Activated CD4-positive, alpha-beta memory T cell treated with anti-CD3 and anti-CD28 coated beads, Interleukin-2, amount 10 ng/mL, durations not matched to agents 7 days and 5 days (primary cell): ENCODE measurements at regions of chr14 and their contacts with region 1.

Region 1: DNA sequence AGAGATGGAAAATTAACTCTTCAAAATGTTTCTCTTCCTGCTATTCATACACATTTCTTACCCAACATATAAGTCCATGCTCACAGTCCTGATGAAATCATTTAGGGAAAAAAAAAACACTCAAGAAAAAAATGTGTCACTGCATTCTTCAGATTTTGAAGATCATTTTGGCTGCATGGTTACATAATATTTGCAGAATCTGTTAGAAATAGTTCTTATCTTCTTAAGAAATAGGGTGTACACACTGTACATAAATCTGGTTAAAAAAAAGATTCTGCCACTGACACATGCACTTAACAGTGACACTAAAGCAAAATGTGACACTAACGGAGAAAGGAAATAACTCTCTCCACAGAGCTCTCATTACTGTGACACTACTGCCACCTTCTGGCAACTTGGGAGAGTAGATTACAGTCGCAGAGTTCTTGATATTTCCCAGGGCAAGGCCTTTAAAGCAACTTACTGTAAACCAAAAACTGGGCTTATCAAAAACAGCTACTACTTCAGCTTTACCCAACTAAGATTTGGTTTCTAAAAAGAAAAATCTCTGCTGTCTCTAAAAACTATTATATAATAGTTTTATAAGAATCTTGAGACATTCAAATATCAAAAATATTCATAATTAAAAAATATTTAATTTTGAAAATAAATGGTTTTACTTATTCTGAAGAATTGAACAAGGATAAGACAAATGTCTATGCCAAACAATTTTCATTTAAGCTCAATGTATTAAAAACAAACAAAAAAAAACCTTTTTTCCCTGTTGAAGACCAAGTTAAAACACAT is 65.0 kb downstream of the SETD3 start:
- DNase-seq: peak; percentile 67
- H3K4me3 Mint-ChIP-seq: no peak overlapping the region
- H3K27ac Mint-ChIP-seq: peak overlapping the region; percentile 8
- H3K4me1 Mint-ChIP-seq: peaks cover 28% of the 10 kb centered on the region
- H3K27me3 Mint-ChIP-seq: no peaks in the 10 kb centered on the region

Region 2: GRCh38 chr14:98651042-98651441 is 764.6 kb before region 1 on chr14:
- CTCF ChIA-PET with region 1: no interaction called
- POLR2A ChIA-PET with region 1: no interaction called
- DNase-seq: no peak
- H3K4me3 Mint-ChIP-seq: no peak overlapping the region
- H3K27ac Mint-ChIP-seq: no peak overlapping the region
- H3K4me1 Mint-ChIP-seq: no peaks in the 10 kb centered on the region
- H3K27me3 Mint-ChIP-seq: no peaks in the 10 kb centered on the region

Region 3: GRCh38 chr14:99320105-99320572 is 95.5 kb before region 1 on chr14:
- CTCF ChIA-PET with region 1: interaction called, 54 read pairs
- POLR2A ChIA-PET with region 1: interaction called, 3 read pairs
- DNase-seq: peak; percentile 79
- H3K4me3 Mint-ChIP-seq: no peak overlapping the region
- H3K27ac Mint-ChIP-seq: no peak overlapping the region
- H3K4me1 Mint-ChIP-seq: peaks cover 14% of the 10 kb centered on the region
- H3K27me3 Mint-ChIP-seq: no peaks in the 10 kb centered on the region

Region 4: DNA sequence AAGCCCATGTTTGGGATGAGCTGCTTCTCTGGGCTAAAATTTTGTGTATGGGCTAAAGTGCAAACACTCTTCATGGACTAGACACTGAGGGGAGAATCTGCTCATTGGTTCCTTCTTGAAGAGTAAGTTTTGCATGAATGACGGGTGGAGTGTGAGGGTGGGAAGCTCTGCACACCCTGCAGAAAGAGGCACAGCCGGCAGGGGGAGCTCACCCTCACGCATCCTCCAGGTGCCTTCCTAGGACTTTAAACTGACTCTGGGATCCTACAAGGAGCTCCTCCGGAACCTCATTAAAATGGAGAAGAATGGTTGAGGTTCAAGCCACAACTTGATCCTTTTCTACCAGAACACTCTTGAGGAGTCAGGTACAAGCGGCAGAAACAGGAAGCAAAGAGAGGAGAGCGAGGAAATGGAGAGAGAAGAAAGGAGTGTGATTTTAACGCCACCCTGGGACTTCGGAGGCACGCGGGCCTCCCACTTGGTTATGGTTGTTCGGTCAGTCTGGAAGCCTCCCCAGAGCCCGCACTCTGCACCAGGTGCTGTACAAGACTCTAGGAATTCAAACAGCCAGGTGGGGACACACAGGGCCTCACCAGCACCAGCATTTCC is 22.5 kb before region 1 on chr14:
- CTCF ChIA-PET with region 1: interaction called, 94 read pairs
- POLR2A ChIA-PET with region 1: interaction called, 5 read pairs
- DNase-seq: peak; percentile 44
- H3K4me3 Mint-ChIP-seq: no peak overlapping the region
- H3K27ac Mint-ChIP-seq: no peak overlapping the region
- H3K4me1 Mint-ChIP-seq: peaks cover 14% of the 10 kb centered on the region
- H3K27me3 Mint-ChIP-seq: no peaks in the 10 kb centered on the region

Region 5: DNA sequence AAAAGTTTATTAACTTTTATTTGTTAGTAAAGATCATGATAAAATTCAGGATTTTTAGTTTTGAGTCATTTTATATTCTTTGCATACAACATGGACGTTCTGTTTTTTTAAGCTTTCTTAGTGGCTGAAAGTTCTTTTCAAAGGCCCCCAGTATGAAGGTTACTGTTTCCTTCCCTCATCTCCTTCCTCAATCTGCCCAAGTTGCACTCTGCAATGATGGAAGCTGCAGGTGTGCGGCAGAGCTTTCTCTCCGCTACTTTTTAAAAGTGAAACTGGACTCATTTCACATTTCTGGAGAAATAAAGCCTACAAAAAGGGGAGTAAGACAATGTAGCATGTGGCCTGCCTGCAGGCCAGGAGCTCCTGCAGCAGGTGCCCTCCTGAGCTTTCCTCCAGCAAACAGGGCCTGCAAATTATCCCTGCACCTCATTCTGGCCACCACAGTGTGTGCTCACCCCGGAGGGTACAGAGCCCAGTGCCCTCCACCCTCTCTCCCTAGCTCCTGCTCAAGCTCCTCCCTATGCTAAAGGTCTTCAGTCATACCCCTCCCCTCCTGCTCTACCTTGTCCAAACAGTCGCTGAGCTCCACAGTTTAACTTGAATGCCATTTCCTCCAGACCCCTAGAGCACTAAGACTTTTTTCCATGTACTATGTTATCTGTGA is 13.9 kb before region 1 on chr14:
- CTCF ChIA-PET with region 1: interaction called, 94 read pairs
- POLR2A ChIA-PET with region 1: interaction called, 5 read pairs
- DNase-seq: no peak
- H3K4me3 Mint-ChIP-seq: no peak overlapping the region
- H3K27ac Mint-ChIP-seq: no peak overlapping the region
- H3K4me1 Mint-ChIP-seq: peaks cover 11% of the 10 kb centered on the region
- H3K27me3 Mint-ChIP-seq: no peaks in the 10 kb centered on the region

Region 6: GRCh38 chr14:99436247-99437180 is 20.8 kb after region 1 on chr14:
- CTCF ChIA-PET with region 1: interaction called, 16 read pairs
- POLR2A ChIA-PET with region 1: interaction called, 3 read pairs
- DNase-seq: peak; percentile 33
- H3K4me3 Mint-ChIP-seq: no peak overlapping the region
- H3K27ac Mint-ChIP-seq: peak overlapping the region; percentile 85
- H3K4me1 Mint-ChIP-seq: peaks cover 40% of the 10 kb centered on the region
- H3K27me3 Mint-ChIP-seq: no peaks in the 10 kb centered on the region

Region 7: GRCh38 chr14:99480917-99481744 is 65.4 kb after region 1 on chr14 and contains the start of gene CCNK:
- CTCF ChIA-PET with region 1: interaction called, 16 read pairs
- POLR2A ChIA-PET with region 1: no interaction called
- DNase-seq: peak; percentile 100
- H3K4me3 Mint-ChIP-seq: peak within 1 kb of the TSS; percentile 96
- H3K27ac Mint-ChIP-seq: peak within 1 kb of the TSS; percentile 94
- H3K4me1 Mint-ChIP-seq: peaks cover 46% of the 10 kb centered on the region
- H3K27me3 Mint-ChIP-seq: no peaks in the 10 kb centered on the region
- total RNA-seq, gene CCNK: 79.2 to 83.7 TPM